MCF 10A (cell line): ENCODE measurements at regions of chr4 and their contacts with region 1.

Region 1: DNA sequence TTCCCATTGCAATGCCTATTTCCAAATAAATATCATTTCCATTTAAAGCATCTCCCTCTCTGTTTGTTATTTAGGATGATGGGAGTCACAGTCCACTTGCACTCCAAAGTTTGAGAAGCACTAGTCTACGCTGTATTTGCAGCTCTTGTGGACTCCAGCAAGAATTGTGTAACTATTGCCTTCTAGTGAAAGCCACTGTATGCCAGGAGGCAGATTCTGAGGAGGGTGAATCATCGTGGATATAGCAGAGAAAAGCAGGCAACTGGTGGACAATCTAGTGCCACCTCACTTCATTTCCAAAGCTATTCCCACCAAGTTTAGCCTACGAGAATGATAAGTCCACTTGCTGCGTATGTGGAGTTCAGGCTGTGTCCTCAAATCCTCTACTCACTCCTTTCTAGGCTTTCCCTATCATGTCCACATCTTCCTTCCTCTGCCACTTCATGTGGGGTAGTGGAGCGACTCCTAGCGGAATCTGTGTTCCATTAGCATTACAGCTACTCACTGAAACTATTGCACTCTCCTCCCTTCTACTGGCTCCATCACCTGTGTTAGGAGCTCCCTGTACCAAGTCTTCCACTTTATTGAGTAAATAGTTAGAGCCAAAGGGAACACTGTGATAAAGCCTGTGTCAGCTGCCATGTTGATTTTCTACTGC is 501.8 kb upstream of the GALNT7 start:
- DNase-seq: peak; percentile 56
- H3K4me3 Mint-ChIP-seq: no peak overlapping the region
- H3K27ac Mint-ChIP-seq: no peak overlapping the region
- H3K4me1 Mint-ChIP-seq: peaks cover 9% of the 10 kb centered on the region
- H3K27me3 Mint-ChIP-seq: peaks cover 90% of the 10 kb centered on the region
- CTCF ChIP-seq: peak; percentile 21

Region 2: GRCh38 chr4:172232966-172233365 is 433.9 kb before region 1 on chr4:
- CTCF ChIA-PET with region 1: no interaction called
- POLR2A ChIA-PET with region 1: no interaction called
- intact Hi-C with region 1: loop called (anchors 10 kb)
- DNase-seq: peak; percentile 9
- H3K4me3 Mint-ChIP-seq: no peak overlapping the region
- H3K27ac Mint-ChIP-seq: no peak overlapping the region
- H3K4me1 Mint-ChIP-seq: no peaks in the 10 kb centered on the region
- H3K27me3 Mint-ChIP-seq: peaks cover 86% of the 10 kb centered on the region
- CTCF ChIP-seq: no peak